Thyroid gland (tissue), 4 donors: ENCODE measurements at regions of chr3 and their contacts with region 1.

Region 1: DNA sequence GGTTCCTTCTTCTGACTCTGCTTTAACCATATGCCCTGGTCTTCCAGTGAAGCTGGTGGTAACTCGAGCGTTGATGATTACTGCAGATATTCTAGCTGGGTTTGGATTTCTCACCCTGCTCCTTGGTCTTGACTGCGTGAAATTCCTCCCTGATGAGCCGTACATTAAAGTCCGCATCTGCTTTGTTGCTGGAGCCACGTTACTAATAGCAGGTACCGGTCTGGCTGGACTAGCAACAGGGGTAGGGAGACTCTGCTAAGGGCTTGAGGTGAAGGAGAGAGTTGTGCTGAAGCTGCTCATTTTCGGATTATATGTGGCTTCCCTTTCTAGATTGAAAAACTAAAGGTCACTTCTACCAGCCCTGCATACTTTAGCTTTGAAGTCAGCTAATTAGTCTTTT is 16.8 kb downstream of the CLDN16 start:
- DNase-seq: no peak
- H3K4me3 ChIP-seq: no peak overlapping the region
- H3K27ac ChIP-seq: no peak overlapping the region
- H3K4me1 ChIP-seq: no peaks in the 10 kb centered on the region
- H3K27me3 ChIP-seq: no peaks in the 10 kb centered on the region
- CTCF ChIP-seq: no peak
- POLR2A ChIP-seq: no peak

Region 2: DNA sequence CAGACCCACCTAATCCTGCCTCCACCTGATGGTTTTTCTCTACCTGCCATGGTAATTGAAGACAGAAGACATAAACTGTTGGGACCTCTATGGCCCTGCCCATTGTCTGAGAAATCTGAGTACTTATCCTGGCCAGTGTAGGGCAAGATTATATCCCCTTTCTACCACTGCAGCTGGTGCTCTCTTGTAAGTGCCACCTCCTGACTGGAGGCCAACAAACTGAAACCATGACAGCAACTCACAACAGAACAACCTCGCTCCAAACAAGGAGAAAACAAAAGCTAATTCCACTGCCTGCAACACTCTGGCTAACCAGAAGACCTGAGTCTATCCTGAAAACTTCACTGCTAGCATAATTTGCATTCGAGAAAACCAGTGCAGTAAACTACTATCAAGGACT is 165.4 kb before region 1 on chr3:
- intact Hi-C with region 1: loop called (anchors 5 kb)
- DNase-seq: no peak
- H3K4me3 ChIP-seq: no peak overlapping the region
- H3K27ac ChIP-seq: no peak overlapping the region
- H3K4me1 ChIP-seq: no peaks in the 10 kb centered on the region
- H3K27me3 ChIP-seq: no peaks in the 10 kb centered on the region
- CTCF ChIP-seq: no peak
- POLR2A ChIP-seq: no peak

Region 3: GRCh38 chr3:190456770-190457169 is 52.1 kb after region 1 on chr3:
- intact Hi-C with region 1: no loop called
- DNase-seq: no peak
- H3K4me3 ChIP-seq: no peak overlapping the region
- H3K27ac ChIP-seq: no peak overlapping the region
- H3K4me1 ChIP-seq: no peaks in the 10 kb centered on the region
- H3K27me3 ChIP-seq: no peaks in the 10 kb centered on the region
- CTCF ChIP-seq: no peak
- POLR2A ChIP-seq: no peak

Region 4: GRCh38 chr3:190614226-190615059 is 209.7 kb after region 1 on chr3:
- intact Hi-C with region 1: no loop called
- DNase-seq: no peak
- H3K4me3 ChIP-seq: no peak overlapping the region
- H3K27ac ChIP-seq: no peak overlapping the region
- H3K4me1 ChIP-seq: no peaks in the 10 kb centered on the region
- H3K27me3 ChIP-seq: no peaks in the 10 kb centered on the region
- CTCF ChIP-seq: no peak
- POLR2A ChIP-seq: no peak

Region 5: GRCh38 chr3:190826018-190826417 is 421.3 kb after region 1 on chr3:
- intact Hi-C with region 1: no loop called
- DNase-seq: peak; percentile 81 to 86
- H3K4me3 ChIP-seq: no peak overlapping the region
- H3K27ac ChIP-seq: peak overlapping the region; percentile 27 to 38 (median 30)
- H3K4me1 ChIP-seq: peaks cover 16 to 17% of the 10 kb centered on the region in 2 donors
- H3K27me3 ChIP-seq: no peaks in the 10 kb centered on the region
- CTCF ChIP-seq: no peak
- POLR2A ChIP-seq: no peak